CD8-positive, alpha-beta T cell (primary cell): ENCODE measurements at regions of chr5 and their contacts with region 1.

Region 1: GRCh38 chr5:6090079-6090654 is 288.2 kb downstream of the MED10 start:
- DNase-seq: no peak
- ATAC-seq: no peak
- H3K4me3 ChIP-seq: no peak overlapping the region
- H3K4me3 Mint-ChIP-seq: no peak overlapping the region
- H3K27ac ChIP-seq: no peak overlapping the region
- H3K27ac Mint-ChIP-seq: no peak overlapping the region
- H3K4me1 ChIP-seq: no peaks in the 10 kb centered on the region
- H3K4me1 Mint-ChIP-seq: no peaks in the 10 kb centered on the region
- H3K27me3 ChIP-seq: no peaks in the 10 kb centered on the region
- H3K27me3 Mint-ChIP-seq: no peaks in the 10 kb centered on the region
- CTCF ChIP-seq: no peak

Region 2: DNA sequence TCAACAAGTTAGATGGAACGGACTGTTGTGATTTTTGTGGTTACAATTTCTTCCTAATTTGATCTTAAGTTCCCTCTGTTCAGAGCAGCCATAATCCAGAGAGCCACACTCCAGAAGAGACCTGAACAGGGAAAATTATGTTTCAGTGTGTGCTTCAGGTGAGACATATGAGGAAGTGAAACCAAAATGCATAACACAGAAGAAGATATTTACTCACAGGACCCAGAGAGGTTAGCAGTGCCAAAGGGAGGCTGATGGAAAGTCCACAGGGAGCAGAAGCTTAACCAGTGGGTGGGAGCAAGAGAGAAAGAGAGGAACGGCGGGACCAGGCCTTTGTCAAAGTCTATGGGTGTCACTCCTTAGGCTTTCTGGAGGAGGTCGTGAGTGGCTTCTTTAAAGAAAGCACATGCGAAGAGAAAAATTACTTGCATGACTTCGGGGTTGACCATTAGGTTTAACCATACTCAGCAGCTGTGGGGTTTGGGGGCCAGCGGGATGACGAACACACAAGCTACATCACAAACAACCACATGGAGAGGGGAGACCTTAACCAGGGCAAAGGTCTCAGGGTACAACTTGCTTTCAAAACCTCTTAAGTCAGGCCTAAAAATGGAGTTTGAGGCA is 146.8 kb after region 1 on chr5:
- CTCF ChIA-PET with region 1: no interaction called
- POLR2A ChIA-PET with region 1: no interaction called
- intact Hi-C with region 1: no loop called
- DNase-seq: no peak
- ATAC-seq: no peak
- H3K4me3 ChIP-seq: no peak overlapping the region
- H3K4me3 Mint-ChIP-seq: no peak overlapping the region
- H3K27ac ChIP-seq: no peak overlapping the region
- H3K27ac Mint-ChIP-seq: no peak overlapping the region
- H3K4me1 ChIP-seq: no peaks in the 10 kb centered on the region
- H3K4me1 Mint-ChIP-seq: no peaks in the 10 kb centered on the region
- H3K27me3 ChIP-seq: no peaks in the 10 kb centered on the region
- H3K27me3 Mint-ChIP-seq: peaks cover 7% of the 10 kb centered on the region
- CTCF ChIP-seq: no peak

Region 3: GRCh38 chr5:7834982-7835381 is 1744.8 kb after region 1 on chr5:
- CTCF ChIA-PET with region 1: no interaction called
- POLR2A ChIA-PET with region 1: no interaction called
- intact Hi-C with region 1: loop called in 1 of 2 experiments (anchors 5 kb)
- DNase-seq: no peak
- ATAC-seq: no peak
- H3K4me3 ChIP-seq: no peak overlapping the region
- H3K4me3 Mint-ChIP-seq: no peak overlapping the region
- H3K27ac ChIP-seq: no peak overlapping the region
- H3K27ac Mint-ChIP-seq: no peak overlapping the region
- H3K4me1 ChIP-seq: no peaks in the 10 kb centered on the region
- H3K4me1 Mint-ChIP-seq: no peaks in the 10 kb centered on the region
- H3K27me3 ChIP-seq: no peaks in the 10 kb centered on the region
- H3K27me3 Mint-ChIP-seq: peaks cover 9% of the 10 kb centered on the region
- CTCF ChIP-seq: no peak